Left colon (tissue), 2 donors: ENCODE measurements at regions of chr2 and their contacts with region 1.

Region 1: DNA sequence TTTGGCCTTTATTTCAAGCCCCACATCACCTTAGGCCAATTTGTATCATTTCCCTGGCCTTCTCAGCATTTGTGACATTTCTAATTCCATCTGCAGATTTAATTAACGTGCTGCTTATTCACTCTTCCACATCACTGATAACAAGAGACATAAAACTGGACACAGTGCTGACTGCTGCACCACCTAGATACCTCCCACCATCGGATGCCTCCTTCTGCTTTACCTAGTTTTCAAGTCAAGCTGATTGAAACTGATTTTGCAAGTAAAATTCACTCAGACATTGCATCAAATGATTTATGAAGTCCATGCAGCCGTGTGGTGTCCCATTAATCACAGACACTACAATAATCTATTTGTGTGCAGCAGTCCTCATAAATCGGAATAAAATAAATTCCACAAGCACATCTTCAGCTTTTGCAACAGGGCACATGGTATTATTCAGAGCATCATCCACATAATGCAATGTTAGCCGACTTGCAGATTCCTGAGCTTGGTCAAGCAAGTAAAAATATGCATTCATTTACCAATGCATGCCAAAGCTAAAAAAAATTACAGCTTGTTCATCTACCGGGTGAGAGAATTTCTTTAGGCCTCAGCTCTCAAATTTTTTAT is 15.9 kb upstream of the CRIM1 start:
- DNase-seq: no peak
- ATAC-seq: no peak

Region 2: GRCh38 chr2:36478332-36478738 is 138.6 kb after region 1 on chr2:
- intact Hi-C with region 1: no loop called
- DNase-seq: no peak
- ATAC-seq: peak; percentile 48

Region 3: GRCh38 chr2:36633470-36634092 is 293.9 kb after region 1 on chr2:
- intact Hi-C with region 1: no loop called
- DNase-seq: no peak
- ATAC-seq: no peak

Region 4: GRCh38 chr2:36762764-36763490 is 423.2 kb after region 1 on chr2:
- intact Hi-C with region 1: loop called in 1 of 2 experiments (anchors 10 kb)
- DNase-seq: no peak
- ATAC-seq: peak; percentile 51